ENCODE measurements at regions of chr3 and their contacts with region 1.

Region 1: DNA sequence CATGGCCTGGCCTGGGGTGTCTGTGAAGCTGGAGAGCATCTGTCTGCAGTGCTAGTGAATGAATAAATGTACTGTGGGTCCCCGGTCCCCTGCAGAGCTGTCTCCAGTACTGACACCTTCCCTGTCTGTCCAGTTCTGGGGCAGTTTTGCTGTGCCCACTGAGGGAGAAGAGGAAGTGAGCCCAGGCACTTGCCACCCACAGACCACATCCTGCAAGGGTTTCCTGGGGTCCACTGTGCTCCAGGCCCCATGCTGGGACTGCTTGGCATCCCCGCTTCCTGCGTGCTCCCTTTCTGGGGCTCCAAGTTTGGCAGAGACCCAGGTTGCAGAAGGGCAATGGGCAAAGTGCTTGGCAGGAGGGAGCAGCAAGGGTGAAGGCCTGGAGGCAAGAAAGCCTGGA is 4.9 kb upstream of the SLC6A6 start:
- DNase-seq: no peak
- H3K4me3 ChIP-seq: no peak overlapping the region
- H3K27ac ChIP-seq: no peak overlapping the region
- H3K4me1 ChIP-seq: no peaks in the 10 kb centered on the region
- H3K27me3 ChIP-seq: no peaks in the 10 kb centered on the region
- CTCF ChIP-seq: no peak
- POLR2A ChIP-seq: no peak

Region 2: DNA sequence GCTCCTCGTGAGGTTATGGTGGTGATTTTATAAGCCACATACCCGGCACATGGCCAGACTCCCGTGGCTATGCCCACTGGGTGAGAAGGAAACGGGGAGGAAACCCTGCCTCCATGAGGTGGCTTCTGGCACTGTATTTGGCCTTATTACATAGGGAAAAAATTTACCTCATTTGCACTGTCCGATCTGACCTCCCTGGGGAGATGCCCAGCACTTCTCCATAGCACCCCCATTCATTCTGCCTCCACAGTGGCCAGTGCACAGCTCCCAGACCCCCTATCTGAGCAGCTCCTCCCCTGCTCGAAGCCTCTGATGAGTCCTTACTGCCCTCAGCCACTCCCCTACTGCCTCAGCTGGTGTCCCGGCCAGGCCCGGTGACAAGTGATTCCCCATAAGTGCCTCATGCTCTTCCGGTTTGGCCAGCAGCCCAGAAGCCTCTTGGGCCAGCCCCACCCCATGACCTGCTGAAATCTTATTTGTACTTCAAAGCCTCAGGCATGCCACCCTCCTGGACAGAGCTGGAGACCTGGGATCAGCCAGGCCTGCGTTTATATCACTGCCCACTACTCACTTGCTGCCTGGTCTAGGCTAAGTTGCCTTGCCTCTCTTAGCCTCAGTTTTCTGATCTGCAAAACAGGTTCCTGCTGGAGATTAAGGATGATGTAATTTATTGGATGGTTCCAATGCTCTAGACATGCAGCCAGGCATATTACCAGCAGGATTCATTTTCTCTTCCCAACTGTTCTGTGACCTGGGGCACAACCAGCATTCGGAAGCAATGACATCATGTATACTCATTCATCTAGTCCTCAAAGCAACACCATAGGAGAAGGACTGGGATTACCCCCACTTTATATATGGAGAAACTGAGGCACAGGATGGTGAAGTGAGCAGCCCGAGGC is 25.7 kb before region 1 on chr3:
- intact Hi-C with region 1: loop called (anchors 2 kb)
- DNase-seq: peak; percentile 75 to 80
- H3K4me3 ChIP-seq: no peak overlapping the region
- H3K27ac ChIP-seq: peak overlapping the region; percentile 38 to 41
- H3K4me1 ChIP-seq: peaks cover 3 to 10% of the 10 kb centered on the region in 2 donors
- H3K27me3 ChIP-seq: no peaks in the 10 kb centered on the region
- CTCF ChIP-seq: no peak
- POLR2A ChIP-seq: no peak

Measured in breast epithelium (tissue), 4 donors.